ENCODE measurements at regions of chr12 and their contacts with region 1.

Region 1: GRCh38 chr12:15584366-15585041 is 204.7 kb downstream of the EPS8 start:
- DNase-seq: no peak
- ATAC-seq: peak; percentile 21

Region 2: GRCh38 chr12:15532364-15532977 is 52.0 kb before region 1 on chr12:
- intact Hi-C with region 1: loop called (anchors 10 kb)
- DNase-seq: no peak
- ATAC-seq: peak; percentile 42

Measured in left ventricle myocardium superior (tissue), 1 donor.